MCF 10A (cell line): ENCODE measurements at regions of chr12 and their contacts with region 1.

Region 1: DNA sequence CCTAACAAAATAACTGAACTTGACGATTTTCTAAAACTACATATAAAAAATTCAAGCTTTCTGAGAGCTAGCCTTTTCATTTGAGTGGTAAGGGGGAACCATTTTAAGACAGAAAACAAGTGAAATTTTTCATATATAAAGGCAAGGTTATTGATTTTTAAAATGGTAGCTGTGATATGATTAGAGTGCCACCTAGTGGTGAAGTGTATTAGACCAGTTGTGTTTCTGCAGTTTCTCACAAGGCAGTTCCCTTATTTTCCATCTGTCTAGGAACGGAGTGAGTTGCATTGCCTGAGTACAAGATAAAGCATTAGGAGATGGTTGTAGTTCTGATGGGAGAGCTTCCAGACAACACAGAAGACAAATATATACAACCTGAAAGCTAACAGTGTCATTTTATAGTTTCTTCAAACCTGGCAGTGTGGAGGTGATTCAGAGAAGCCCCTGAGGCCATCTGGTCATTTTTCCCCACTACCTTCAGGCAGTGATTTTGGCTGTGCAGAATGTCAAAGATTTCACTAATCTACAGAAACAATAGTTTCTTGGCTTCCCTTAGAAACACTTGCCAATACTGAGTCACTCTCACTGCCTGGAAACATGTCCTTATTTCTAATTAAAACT is 180.8 kb downstream of the C12orf50 start:
- DNase-seq: peak; percentile 70
- H3K4me3 Mint-ChIP-seq: no peak overlapping the region
- H3K27ac Mint-ChIP-seq: peak overlapping the region; percentile 8
- H3K4me1 Mint-ChIP-seq: peaks cover 12% of the 10 kb centered on the region
- H3K27me3 Mint-ChIP-seq: no peaks in the 10 kb centered on the region
- CTCF ChIP-seq: peak; percentile 75

Region 2: GRCh38 chr12:86712425-86712843 is 1135.9 kb before region 1 on chr12:
- CTCF ChIA-PET with region 1: interaction called, 3 read pairs
- POLR2A ChIA-PET with region 1: no interaction called
- intact Hi-C with region 1: loop called (anchors 10 kb)
- DNase-seq: peak; percentile 96
- H3K4me3 Mint-ChIP-seq: peak overlapping the region; percentile 53
- H3K27ac Mint-ChIP-seq: peak overlapping the region; percentile 98
- H3K4me1 Mint-ChIP-seq: peaks cover 15% of the 10 kb centered on the region
- H3K27me3 Mint-ChIP-seq: no peaks in the 10 kb centered on the region
- CTCF ChIP-seq: no peak

Region 3: DNA sequence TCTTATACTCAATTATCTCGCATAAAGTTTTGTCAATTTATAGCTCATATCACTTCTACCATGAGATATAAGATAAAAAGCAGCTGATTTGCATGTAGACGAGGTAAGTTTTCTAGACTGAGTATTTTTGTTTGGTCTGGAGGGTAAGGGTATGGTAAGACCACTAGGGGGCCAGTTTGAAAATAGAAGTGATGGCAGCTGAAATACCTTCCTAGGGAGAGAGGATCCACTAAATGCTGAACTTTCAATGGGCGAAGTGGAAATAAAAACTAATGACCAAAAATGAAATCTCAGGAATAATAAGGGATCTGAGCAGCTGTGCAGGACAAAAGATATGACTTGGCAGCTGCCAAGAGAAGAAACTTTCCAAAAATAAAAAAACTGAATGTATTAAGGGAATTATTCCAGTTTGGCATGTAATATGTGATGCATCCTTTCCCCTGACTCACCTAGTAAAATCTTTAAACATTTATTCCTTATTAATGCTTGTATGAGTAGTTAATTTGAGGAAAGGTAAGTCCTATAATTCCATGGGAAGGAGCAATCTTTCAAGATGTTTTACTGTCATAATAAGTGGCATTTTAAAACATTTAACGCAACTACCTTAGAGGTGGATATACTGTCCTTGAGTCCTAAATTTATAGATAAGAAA is 573.6 kb before region 1 on chr12:
- CTCF ChIA-PET with region 1: no interaction called
- POLR2A ChIA-PET with region 1: no interaction called
- intact Hi-C with region 1: loop called (anchors 1 kb)
- DNase-seq: peak; percentile 29
- H3K4me3 Mint-ChIP-seq: no peak overlapping the region
- H3K27ac Mint-ChIP-seq: no peak overlapping the region
- H3K4me1 Mint-ChIP-seq: no peaks in the 10 kb centered on the region
- H3K27me3 Mint-ChIP-seq: no peaks in the 10 kb centered on the region
- CTCF ChIP-seq: peak; percentile 27

Region 4: GRCh38 chr12:87667378-87667777 is 181.0 kb before region 1 on chr12:
- CTCF ChIA-PET with region 1: interaction called, 6 read pairs
- POLR2A ChIA-PET with region 1: interaction called, 3 read pairs
- intact Hi-C with region 1: loop called (anchors 5 kb)
- DNase-seq: peak; percentile 55
- H3K4me3 Mint-ChIP-seq: no peak overlapping the region
- H3K27ac Mint-ChIP-seq: no peak overlapping the region
- H3K4me1 Mint-ChIP-seq: peaks cover 8% of the 10 kb centered on the region
- H3K27me3 Mint-ChIP-seq: no peaks in the 10 kb centered on the region
- CTCF ChIP-seq: peak; percentile 47

Region 5: DNA sequence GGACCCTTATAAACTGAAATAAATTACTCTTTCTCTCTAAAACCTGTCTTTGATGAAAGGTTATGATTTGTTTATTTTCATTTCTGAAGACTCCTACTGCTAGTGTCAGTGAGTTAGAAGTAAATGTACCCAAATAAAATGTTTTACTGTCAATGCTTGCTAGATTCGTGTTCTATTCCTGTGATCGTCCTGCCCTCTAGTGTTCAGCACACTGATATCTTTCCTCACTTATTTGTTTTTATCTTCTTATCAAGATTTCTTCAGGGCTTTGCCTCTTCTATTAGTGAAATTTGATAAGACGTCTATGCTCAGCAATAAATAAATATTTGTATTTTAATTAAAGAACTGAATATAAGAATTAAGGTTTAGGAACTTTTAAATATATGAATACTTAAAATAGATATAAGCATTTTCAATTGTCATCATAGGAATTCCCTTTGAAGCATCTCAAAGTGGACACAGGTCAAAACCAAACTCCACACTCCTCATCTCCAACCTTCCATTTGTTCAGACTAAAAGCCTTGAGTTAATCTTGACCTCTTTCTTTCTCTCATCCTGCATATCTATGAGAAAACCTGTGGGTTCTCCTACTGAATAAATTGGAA is 105.0 kb after region 1 on chr12:
- CTCF ChIA-PET with region 1: interaction called, 4 read pairs
- POLR2A ChIA-PET with region 1: no interaction called
- intact Hi-C with region 1: loop called (anchors 1 kb)
- DNase-seq: peak; percentile 62
- H3K4me3 Mint-ChIP-seq: no peak overlapping the region
- H3K27ac Mint-ChIP-seq: peak overlapping the region; percentile 52
- H3K4me1 Mint-ChIP-seq: peaks cover 5% of the 10 kb centered on the region
- H3K27me3 Mint-ChIP-seq: no peaks in the 10 kb centered on the region
- CTCF ChIP-seq: peak; percentile 61